ENCODE measurements at regions of chr4 and their contacts with region 1.

Region 1: DNA sequence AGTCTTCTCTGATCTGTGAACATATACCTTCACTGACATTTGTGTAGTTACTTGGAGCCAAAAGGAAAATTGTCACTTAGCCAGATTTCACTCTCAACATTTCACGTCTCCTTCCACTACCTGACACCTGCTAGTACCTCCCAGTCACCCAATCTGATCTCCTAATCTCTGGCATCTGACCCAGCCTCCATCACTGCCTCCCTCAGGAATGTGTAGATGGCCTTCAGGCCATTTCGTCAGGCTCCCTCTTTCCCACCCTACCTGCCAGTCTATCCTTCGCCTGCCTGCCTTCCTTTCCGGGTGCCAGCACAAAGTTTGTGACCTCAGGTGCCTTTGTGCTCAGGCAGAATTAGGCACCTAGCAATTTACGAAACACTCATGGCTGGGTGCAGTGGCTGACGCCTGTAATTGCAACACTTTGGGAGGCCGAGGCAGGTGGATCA is 40.9 kb downstream of the GALNT7 start:
- DNase-seq: no peak
- H3K4me3 ChIP-seq: no peak overlapping the region
- H3K27ac ChIP-seq: no peak overlapping the region
- H3K4me1 ChIP-seq: peaks cover 0 to 22% (median 21%) of the 10 kb centered on the region in 4 donors
- H3K27me3 ChIP-seq: no peaks in the 10 kb centered on the region
- CTCF ChIP-seq: no peak
- EP300 ChIP-seq: no peak
- POLR2A ChIP-seq: no peak

Region 2: GRCh38 chr4:173159791-173160190 is 49.7 kb before region 1 on chr4:
- intact Hi-C with region 1: loop called (anchors 2 kb)
- DNase-seq: no peak
- H3K4me3 ChIP-seq: no peak overlapping the region
- H3K27ac ChIP-seq: no peak overlapping the region
- H3K4me1 ChIP-seq: no peaks in the 10 kb centered on the region
- H3K27me3 ChIP-seq: no peaks in the 10 kb centered on the region
- CTCF ChIP-seq: no peak
- EP300 ChIP-seq: no peak
- POLR2A ChIP-seq: no peak

Measured in sigmoid colon (tissue), 7 donors.